Psoas muscle (tissue), 8 donors: ENCODE measurements at regions of chr3 and their contacts with region 1.

Region 1: GRCh38 chr3:184371570-184372018 is 6.4 kb downstream of the THPO start:
- DNase-seq: peak; percentile 78 to 91
- ATAC-seq: peak; percentile 91 to 97 (median 94)
- H3K4me3 ChIP-seq: no peak overlapping the region
- H3K27ac ChIP-seq: no peak overlapping the region
- H3K4me1 ChIP-seq: peaks cover 17% of the 10 kb centered on the region
- H3K27me3 ChIP-seq: no peaks in the 10 kb centered on the region
- CTCF ChIP-seq: peak; percentile 98

Region 2: GRCh38 chr3:184469423-184469822 is 97.8 kb after region 1 on chr3:
- intact Hi-C with region 1: loop called in 1 of 2 experiments (anchors 2 kb)
- DNase-seq: no peak
- ATAC-seq: peak in 1 of 4 donors; percentile 21
- H3K4me3 ChIP-seq: no peak overlapping the region
- H3K27ac ChIP-seq: no peak overlapping the region
- H3K4me1 ChIP-seq: peaks cover 4% of the 10 kb centered on the region
- H3K27me3 ChIP-seq: peaks cover 0 to 9% (median 0%) of the 10 kb centered on the region in 3 donors
- CTCF ChIP-seq: peak; percentile 37

Region 3: GRCh38 chr3:184513276-184514170 is 141.9 kb after region 1 on chr3:
- intact Hi-C with region 1: loop called (anchors 1 to 2 kb)
- DNase-seq: peak; percentile 82 to 90
- ATAC-seq: peak; percentile 97 to 100 (median 98)
- H3K4me3 ChIP-seq: peak overlapping the region; percentile 62
- H3K27ac ChIP-seq: no peak overlapping the region
- H3K4me1 ChIP-seq: no peaks in the 10 kb centered on the region
- H3K27me3 ChIP-seq: peaks cover 3 to 29% (median 8%) of the 10 kb centered on the region in 3 donors
- CTCF ChIP-seq: peak; percentile 79

Region 4: GRCh38 chr3:184543843-184544512 is 172.4 kb after region 1 on chr3:
- intact Hi-C with region 1: loop called (anchors 2 kb)
- DNase-seq: peak; percentile 36 to 74
- ATAC-seq: peak; percentile 85 to 96 (median 90)
- H3K4me3 ChIP-seq: no peak overlapping the region
- H3K27ac ChIP-seq: no peak overlapping the region
- H3K4me1 ChIP-seq: no peaks in the 10 kb centered on the region
- H3K27me3 ChIP-seq: peaks cover 0 to 23% (median 5%) of the 10 kb centered on the region in 3 donors
- CTCF ChIP-seq: peak; percentile 97

Region 5: GRCh38 chr3:184777336-184778004 is 405.9 kb after region 1 on chr3:
- intact Hi-C with region 1: loop called in 1 of 2 experiments (anchors 10 kb)
- DNase-seq: peak; percentile 87 to 89
- ATAC-seq: peak; percentile 90 to 98 (median 96)
- H3K4me3 ChIP-seq: no peak overlapping the region
- H3K27ac ChIP-seq: no peak overlapping the region
- H3K4me1 ChIP-seq: no peaks in the 10 kb centered on the region
- H3K27me3 ChIP-seq: peaks cover 0 to 16% (median 2%) of the 10 kb centered on the region in 3 donors
- CTCF ChIP-seq: peak; percentile 96